ENCODE measurements at regions of chr11 and their contacts with region 1.

Region 1: DNA sequence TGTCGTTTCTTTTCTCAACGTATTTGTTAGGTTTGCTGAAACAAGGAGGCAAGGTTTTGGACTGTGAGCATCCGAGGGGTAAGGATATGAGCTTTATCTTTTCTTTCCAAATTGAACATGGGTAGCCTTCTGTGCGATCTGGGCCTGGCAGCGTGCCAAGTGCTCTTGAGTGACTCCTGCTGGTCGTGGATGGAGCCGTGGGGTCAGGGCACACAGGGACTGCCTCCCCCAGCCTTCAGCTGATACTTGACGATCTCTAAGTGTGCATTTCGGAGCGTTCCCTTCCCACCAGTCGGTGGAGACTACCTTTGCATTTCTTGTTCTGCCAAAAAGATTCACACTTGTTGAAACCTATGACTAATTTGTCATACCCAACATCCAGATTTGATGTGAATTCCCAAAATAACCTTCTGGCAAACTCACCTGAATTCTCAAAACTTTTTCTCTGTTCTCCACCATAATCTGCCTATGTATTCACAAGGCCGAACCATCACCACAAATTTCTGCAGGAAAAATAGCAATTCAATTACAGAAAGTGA is 40.1 kb upstream of the CLMP start:
- DNase-seq: peak; percentile 64 to 83 (median 75)
- H3K4me3 ChIP-seq: no peak overlapping the region
- H3K27ac ChIP-seq: no peak overlapping the region
- H3K4me1 ChIP-seq: peaks cover 4% of the 10 kb centered on the region
- H3K27me3 ChIP-seq: no peaks in the 10 kb centered on the region
- CTCF ChIP-seq: peak; percentile 34 to 78 (median 45)
- EP300 ChIP-seq: no peak
- POLR2A ChIP-seq: no peak

Region 2: GRCh38 chr11:123166071-123166559 is 69.1 kb before region 1 on chr11:
- intact Hi-C with region 1: loop called in 1 of 4 experiments (anchors 10 kb)
- DNase-seq: peak; percentile 77 to 90 (median 85)
- H3K4me3 ChIP-seq: no peak overlapping the region
- H3K27ac ChIP-seq: peak overlapping the region in 1 of 2 donors; percentile 65
- H3K4me1 ChIP-seq: peaks cover 5% of the 10 kb centered on the region
- H3K27me3 ChIP-seq: no peaks in the 10 kb centered on the region
- CTCF ChIP-seq: peak; percentile 40 to 74 (median 62)
- EP300 ChIP-seq: no peak
- POLR2A ChIP-seq: no peak